ENCODE measurements at regions of chr13 and their contacts with region 1.

Region 1: DNA sequence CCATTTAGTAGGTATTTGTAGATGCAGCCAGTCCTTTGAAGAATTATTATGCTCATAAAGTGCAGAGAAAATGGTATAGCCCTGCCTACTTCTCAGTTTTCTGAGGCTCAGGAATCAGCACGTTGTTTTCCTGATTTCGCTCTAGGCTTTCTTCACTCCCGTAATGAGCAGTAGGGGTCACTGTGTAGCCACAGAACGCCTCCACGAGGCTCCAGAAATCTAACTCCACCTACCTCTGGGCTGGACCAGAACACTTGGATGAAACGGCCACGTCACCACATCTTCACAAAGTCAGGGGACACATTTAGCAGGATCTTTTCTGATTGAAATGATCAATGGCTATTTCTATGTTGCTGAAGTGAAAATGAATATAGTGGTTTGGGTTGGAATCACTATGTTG is 49.8 kb upstream of the GTF3A start:
- DNase-seq: peak in 1 of 2 donors; percentile 62
- ATAC-seq: peak; percentile 89 to 97 (median 92)
- H3K4me3 ChIP-seq: no peak overlapping the region
- H3K27ac ChIP-seq: no peak overlapping the region
- H3K4me1 ChIP-seq: peaks cover 0 to 4% (median 0%) of the 10 kb centered on the region in 9 donors
- H3K27me3 ChIP-seq: peaks cover 0 to 68% (median 35%) of the 10 kb centered on the region in 7 donors
- CTCF ChIP-seq: peak; percentile 47 to 86 (median 75)

Region 2: GRCh38 chr13:27712421-27712820 is 337.8 kb after region 1 on chr13:
- intact Hi-C with region 1: loop called in 1 of 10 experiments (anchors 2 kb)
- DNase-seq: peak; percentile 12 to 17
- ATAC-seq: peak in 2 of 8 donors; percentile 35 to 70
- H3K4me3 ChIP-seq: no peak overlapping the region
- H3K27ac ChIP-seq: no peak overlapping the region
- H3K4me1 ChIP-seq: no peaks in the 10 kb centered on the region
- H3K27me3 ChIP-seq: peaks cover 0 to 14% (median 0%) of the 10 kb centered on the region in 7 donors
- CTCF ChIP-seq: peak; percentile 20 to 59 (median 43)

Region 3: DNA sequence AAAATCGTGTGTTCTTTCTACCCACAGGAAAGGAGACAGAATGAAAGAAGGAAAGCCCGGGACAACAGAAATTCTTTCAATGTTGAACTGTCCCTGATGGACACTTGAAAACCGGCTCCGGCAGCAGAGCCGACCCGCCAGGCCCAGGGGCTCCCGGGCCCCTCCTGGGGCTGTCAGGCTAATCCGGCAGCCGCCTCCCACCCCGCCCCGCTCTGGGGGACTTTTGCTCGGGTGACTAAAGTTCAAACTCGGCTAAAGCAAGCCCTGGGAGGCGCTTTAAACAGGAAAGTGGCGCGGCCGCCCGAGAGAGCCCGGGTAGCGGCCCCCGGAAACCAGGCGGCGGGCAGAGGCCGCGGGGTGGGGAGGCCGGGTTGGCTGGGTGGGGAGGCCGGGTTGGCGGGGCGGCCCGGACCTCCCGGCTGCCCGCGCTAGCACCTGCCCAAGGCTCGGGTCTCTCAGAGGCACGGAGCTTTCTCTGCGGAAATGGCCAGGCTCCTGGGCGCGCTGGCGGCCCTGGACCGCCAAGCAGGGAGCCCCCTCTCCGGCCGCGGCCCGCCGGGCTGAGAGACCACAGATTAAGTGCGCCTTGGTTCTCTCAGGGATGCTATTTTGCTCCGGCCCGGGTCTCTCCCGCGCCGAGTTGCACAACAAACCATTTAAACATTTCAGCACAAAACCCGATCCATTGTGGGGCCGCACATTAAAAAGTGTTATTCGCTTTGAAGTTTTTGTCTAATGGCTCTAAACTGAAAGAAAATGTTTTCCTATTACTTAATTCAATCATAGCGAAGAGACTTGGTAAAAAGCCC is 415.0 kb after region 1 on chr13:
- intact Hi-C with region 1: loop called in 1 of 10 experiments (anchors 5 kb)
- DNase-seq: no peak
- ATAC-seq: no peak
- H3K4me3 ChIP-seq: peak overlapping the region in 7 of 10 donors; percentile 7 to 42 (median 25)
- H3K27ac ChIP-seq: no peak overlapping the region
- H3K4me1 ChIP-seq: peaks cover 0 to 47% (median 35%) of the 10 kb centered on the region in 9 donors
- H3K27me3 ChIP-seq: peaks cover 47 to 98% (median 96%) of the 10 kb centered on the region in 7 donors
- CTCF ChIP-seq: no peak

Region 4: GRCh38 chr13:27826379-27827353 is 452.0 kb after region 1 on chr13:
- intact Hi-C with region 1: loop called in 7 of 10 experiments (anchors 2 to 5 kb)
- DNase-seq: peak; percentile 74 to 76
- ATAC-seq: peak; percentile 87 to 95 (median 91)
- H3K4me3 ChIP-seq: peak overlapping the region in 7 of 10 donors; percentile 4 to 37 (median 23)
- H3K27ac ChIP-seq: no peak overlapping the region
- H3K4me1 ChIP-seq: peaks cover 0 to 18% (median 8%) of the 10 kb centered on the region in 9 donors
- H3K27me3 ChIP-seq: peaks cover 0 to 100% (median 89%) of the 10 kb centered on the region in 7 donors
- CTCF ChIP-seq: peak; percentile 82 to 97 (median 92)

Region 5: DNA sequence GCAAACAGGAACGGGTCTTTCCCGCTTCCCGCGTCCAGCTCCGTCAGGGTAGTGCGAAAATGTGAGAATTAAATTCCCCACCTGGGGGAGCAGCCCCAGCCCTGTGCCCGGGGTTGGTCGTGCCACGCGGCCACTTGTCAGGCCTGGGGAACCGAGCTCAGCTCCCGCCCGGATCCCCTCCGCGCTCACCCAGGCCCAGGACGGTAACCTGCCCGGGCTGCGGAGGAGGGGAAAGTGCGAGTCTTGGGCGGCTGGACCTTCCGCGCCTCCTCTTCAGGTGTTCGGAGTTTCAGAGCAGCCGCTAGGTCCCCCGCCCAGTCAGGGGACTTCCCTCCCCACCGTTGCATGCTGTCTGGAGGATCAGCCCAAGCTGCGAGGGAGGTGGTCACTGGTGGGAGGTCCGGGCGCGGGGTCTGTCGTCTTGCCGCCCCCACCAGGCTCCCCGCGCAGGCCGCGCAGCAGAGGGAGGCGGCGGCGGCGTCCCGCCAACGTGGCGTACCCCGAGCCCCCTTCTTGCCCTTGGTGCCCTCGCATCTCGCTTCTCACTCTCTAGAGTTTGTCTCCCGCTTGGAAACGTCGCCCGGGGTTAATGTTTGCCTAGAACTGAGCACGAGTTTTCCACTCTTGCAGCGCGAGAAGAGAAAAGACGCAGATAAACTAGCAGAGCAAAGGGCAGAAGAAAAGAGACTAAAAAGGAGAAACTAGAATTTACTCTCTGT is 605.8 kb after region 1 on chr13:
- intact Hi-C with region 1: loop called in 1 of 10 experiments (anchors 5 kb)
- DNase-seq: no peak
- ATAC-seq: no peak
- H3K4me3 ChIP-seq: no peak overlapping the region
- H3K27ac ChIP-seq: no peak overlapping the region
- H3K4me1 ChIP-seq: peaks cover 0 to 37% (median 26%) of the 10 kb centered on the region in 9 donors
- H3K27me3 ChIP-seq: peaks cover 64 to 99% (median 97%) of the 10 kb centered on the region in 7 donors
- CTCF ChIP-seq: no peak

Measured in heart right ventricle (tissue), 16 donors.